ENCODE measurements at regions of chr4 and their contacts with region 1.

Region 1: GRCh38 chr4:114659386-114660008 is 60.9 kb downstream of the UGT8 start:
- DNase-seq: peak; percentile 63
- H3K4me3 Mint-ChIP-seq: no peak overlapping the region
- H3K27ac Mint-ChIP-seq: no peak overlapping the region
- H3K4me1 Mint-ChIP-seq: no peaks in the 10 kb centered on the region
- H3K27me3 Mint-ChIP-seq: no peaks in the 10 kb centered on the region
- CTCF ChIP-seq: peak; percentile 68

Region 2: DNA sequence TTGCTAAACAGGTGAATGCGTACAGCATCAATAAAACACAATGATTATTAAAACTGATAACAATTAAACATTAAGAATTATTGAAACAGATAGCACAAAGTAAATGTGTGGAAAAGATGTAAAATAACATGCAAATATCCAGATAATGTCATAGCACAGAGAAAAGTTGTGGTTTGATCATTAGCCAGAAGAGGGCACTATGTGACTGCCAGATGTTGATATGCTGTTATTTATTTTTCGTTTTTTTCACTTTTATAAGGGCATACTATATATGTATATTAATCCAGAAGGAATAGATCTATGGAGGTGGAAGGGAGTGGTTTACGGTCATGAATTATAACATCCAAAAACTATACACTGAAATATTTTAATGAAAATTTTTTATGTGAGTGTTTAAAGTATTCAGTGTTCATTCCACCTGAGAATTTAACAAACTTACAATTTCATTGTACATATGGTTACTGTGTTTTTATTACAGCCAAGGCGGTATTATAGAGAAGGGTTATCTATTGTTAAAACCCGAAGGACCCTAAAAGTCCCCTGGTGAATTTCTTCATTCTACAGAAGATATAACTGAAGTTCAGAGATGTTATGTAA is 272.8 kb before region 1 on chr4:
- CTCF ChIA-PET with region 1: no interaction called
- intact Hi-C with region 1: loop called (anchors 2 kb)
- DNase-seq: peak; percentile 7
- H3K4me3 Mint-ChIP-seq: no peak overlapping the region
- H3K27ac Mint-ChIP-seq: no peak overlapping the region
- H3K4me1 Mint-ChIP-seq: no peaks in the 10 kb centered on the region
- H3K27me3 Mint-ChIP-seq: no peaks in the 10 kb centered on the region
- CTCF ChIP-seq: peak; percentile 38

Region 3: DNA sequence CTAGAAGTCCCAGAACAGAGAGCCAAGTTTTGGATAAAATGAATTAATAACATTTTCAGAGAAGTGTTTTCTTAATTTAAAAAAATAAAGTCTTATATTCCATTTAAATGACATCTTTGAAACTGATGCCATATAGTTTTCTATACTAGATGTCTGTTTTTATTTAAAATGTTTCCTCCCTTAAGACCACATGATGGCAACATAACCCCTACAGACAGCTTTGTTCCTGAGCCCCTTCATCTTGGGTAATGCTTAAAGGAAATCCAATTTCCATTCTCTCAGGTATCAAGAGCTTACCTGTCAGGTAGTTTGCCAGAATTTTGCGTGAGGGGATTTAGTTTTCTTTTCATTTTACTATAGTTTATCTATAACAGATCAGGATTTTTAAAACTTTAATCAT is 242.3 kb before region 1 on chr4:
- CTCF ChIA-PET with region 1: interaction called, 5 read pairs
- intact Hi-C with region 1: loop called (anchors 1 kb)
- DNase-seq: no peak
- H3K4me3 Mint-ChIP-seq: no peak overlapping the region
- H3K27ac Mint-ChIP-seq: no peak overlapping the region
- H3K4me1 Mint-ChIP-seq: peaks cover 9% of the 10 kb centered on the region
- H3K27me3 Mint-ChIP-seq: no peaks in the 10 kb centered on the region
- CTCF ChIP-seq: no peak

Region 4: GRCh38 chr4:114509340-114509739 is 150.2 kb before region 1 on chr4:
- CTCF ChIA-PET with region 1: interaction called, 6 read pairs
- intact Hi-C with region 1: loop called (anchors 1 kb)
- DNase-seq: no peak
- H3K4me3 Mint-ChIP-seq: no peak overlapping the region
- H3K27ac Mint-ChIP-seq: no peak overlapping the region
- H3K4me1 Mint-ChIP-seq: peaks cover 9% of the 10 kb centered on the region
- H3K27me3 Mint-ChIP-seq: peaks cover 63% of the 10 kb centered on the region
- CTCF ChIP-seq: no peak

Region 5: GRCh38 chr4:114598191-114599121 is 61.0 kb before region 1 on chr4 and contains the start of gene UGT8:
- CTCF ChIA-PET with region 1: no interaction called
- intact Hi-C with region 1: loop called (anchors 2 kb)
- DNase-seq: peak; percentile 68
- H3K4me3 Mint-ChIP-seq: peak within 1 kb of the TSS; percentile 98
- H3K27ac Mint-ChIP-seq: peak within 1 kb of the TSS; percentile 94
- H3K4me1 Mint-ChIP-seq: no peaks in the 10 kb centered on the region
- H3K27me3 Mint-ChIP-seq: no peaks in the 10 kb centered on the region
- CTCF ChIP-seq: no peak
- total RNA-seq, gene UGT8: 20.2 and 23.1 TPM in 2 replicates

Region 6: DNA sequence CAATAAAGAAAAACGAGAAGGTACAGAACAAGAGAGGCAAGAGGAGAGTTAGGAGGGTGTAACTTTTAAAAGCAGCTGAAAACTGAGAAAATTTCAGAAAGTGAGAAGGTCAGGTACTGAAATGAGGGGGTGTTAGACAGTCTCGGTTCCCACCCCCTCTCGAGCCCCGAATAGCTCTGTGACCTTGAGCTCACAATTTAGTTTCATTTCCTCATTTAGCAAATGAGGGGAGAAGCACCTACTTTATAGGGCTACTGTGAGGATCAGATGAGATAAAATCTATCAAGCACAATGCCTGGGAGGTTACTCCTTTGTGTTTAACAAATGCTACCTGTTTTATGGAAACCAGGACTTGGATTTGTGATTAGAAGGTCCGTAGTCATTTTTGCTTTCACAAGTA is 56.0 kb before region 1 on chr4:
- CTCF ChIA-PET with region 1: no interaction called
- intact Hi-C with region 1: loop called (anchors 2 kb)
- DNase-seq: no peak
- H3K4me3 Mint-ChIP-seq: no peak overlapping the region
- H3K27ac Mint-ChIP-seq: no peak overlapping the region
- H3K4me1 Mint-ChIP-seq: no peaks in the 10 kb centered on the region
- H3K27me3 Mint-ChIP-seq: no peaks in the 10 kb centered on the region
- CTCF ChIP-seq: no peak

Region 7: GRCh38 chr4:114752391-114753165 is 93.1 kb after region 1 on chr4:
- CTCF ChIA-PET with region 1: no interaction called
- intact Hi-C with region 1: no loop called
- DNase-seq: no peak
- H3K4me3 Mint-ChIP-seq: no peak overlapping the region
- H3K27ac Mint-ChIP-seq: no peak overlapping the region
- H3K4me1 Mint-ChIP-seq: no peaks in the 10 kb centered on the region
- H3K27me3 Mint-ChIP-seq: no peaks in the 10 kb centered on the region
- CTCF ChIP-seq: no peak